AG04449 (cell line): ENCODE measurements at regions of chr2 and their contacts with region 1.

Region 1: DNA sequence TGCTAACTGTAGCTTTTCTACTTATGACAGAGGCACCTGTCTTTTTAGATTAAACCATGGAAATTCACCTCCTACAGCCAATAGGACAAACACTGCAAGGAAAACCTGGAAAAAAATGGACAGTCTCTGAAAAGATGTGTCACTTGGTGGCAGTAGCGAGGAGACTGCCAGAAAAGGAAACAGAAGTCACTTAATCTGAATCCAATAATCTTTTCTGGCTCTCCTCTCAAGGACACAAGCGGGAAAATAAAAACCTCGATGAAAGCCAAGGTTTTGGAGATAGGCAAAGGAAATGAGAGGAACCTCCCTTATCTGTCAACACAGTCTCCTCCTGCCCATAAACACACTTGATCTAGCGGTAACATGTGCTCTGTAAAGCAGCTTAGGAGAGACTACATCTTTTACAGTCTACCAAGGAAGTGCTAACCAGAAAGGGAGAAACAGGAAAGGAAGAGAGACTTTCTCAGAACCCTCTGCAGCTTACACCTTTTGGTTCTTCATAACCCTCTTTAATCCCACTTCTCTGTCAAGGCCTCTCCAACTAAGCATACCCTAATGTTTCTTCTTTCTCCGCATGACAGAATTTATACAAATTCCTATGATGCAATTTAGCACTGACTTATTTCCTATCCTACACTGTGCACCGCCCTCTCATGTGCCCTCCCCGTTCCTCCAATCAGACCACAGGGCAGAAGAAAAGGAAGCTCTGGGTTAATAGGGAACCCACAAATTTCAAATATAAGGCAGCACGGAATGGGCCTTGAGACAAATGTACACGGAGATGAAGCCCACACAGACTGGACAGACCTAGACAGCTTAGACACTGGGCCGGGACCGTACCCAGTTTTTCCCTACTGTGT is 52.8 kb downstream of the CLASP1 start:
- DNase-seq: no peak
- H3K4me3 ChIP-seq: peak overlapping the region; percentile 16; the same call in 1 of the 2 replicates
- CTCF ChIP-seq: peak; percentile 35

Region 2: GRCh38 chr2:121451398-121451797 is 145.1 kb before region 1 on chr2:
- CTCF ChIA-PET with region 1: no interaction called
- POLR2A ChIA-PET with region 1: no interaction called
- DNase-seq: no peak
- H3K4me3 ChIP-seq: no peak overlapping the region
- CTCF ChIP-seq: no peak

Region 3: DNA sequence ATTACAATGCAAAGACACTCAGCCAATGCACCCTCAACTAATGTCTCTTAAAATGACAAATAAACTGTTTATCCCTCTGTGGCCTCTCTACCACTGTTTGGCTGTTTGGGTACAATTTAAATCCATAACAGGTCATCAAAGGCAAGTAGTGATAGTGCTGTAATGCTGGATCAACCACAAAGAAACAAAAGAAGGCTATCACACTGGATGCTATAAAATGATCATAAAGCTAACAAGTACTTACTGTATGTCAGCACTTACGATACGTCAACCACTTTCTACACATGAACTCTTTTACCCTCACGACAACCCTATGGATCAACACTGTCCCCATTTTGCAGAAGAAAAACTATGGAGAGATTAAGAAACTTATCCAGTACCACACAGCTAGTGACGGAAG is 11.7 kb before region 1 on chr2:
- CTCF ChIA-PET with region 1: interaction called, 17 read pairs
- POLR2A ChIA-PET with region 1: no interaction called
- DNase-seq: no peak
- H3K4me3 ChIP-seq: no peak overlapping the region
- CTCF ChIP-seq: no peak

Region 4: DNA sequence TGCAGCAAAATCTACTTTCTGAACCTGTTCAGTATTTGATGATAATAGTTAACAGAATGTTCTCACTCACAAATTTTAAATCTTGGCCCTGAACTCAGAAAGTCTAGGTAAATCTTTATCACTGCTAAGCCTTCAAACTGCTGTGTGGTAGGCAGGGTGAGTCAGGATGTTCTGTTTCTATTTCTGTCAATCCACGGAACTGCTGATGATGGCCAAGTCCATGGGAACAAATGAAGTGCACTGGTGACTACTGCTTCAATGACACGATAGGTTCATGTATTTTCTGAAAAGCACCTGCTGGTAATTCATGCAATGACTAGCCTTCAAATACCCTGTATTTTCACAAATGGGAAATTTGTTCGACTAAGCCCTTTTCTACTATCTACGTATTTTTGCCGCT is 126.0 kb after region 1 on chr2:
- CTCF ChIA-PET with region 1: interaction called, 16 read pairs
- POLR2A ChIA-PET with region 1: no interaction called
- DNase-seq: peak; percentile 40
- H3K4me3 ChIP-seq: no peak overlapping the region; the same call in 1 of the 2 replicates
- CTCF ChIP-seq: no peak

Region 5: GRCh38 chr2:121741450-121741849 is 145.0 kb after region 1 on chr2:
- CTCF ChIA-PET with region 1: no interaction called
- POLR2A ChIA-PET with region 1: no interaction called
- DNase-seq: no peak
- H3K4me3 ChIP-seq: no peak overlapping the region
- CTCF ChIP-seq: no peak

Region 6: DNA sequence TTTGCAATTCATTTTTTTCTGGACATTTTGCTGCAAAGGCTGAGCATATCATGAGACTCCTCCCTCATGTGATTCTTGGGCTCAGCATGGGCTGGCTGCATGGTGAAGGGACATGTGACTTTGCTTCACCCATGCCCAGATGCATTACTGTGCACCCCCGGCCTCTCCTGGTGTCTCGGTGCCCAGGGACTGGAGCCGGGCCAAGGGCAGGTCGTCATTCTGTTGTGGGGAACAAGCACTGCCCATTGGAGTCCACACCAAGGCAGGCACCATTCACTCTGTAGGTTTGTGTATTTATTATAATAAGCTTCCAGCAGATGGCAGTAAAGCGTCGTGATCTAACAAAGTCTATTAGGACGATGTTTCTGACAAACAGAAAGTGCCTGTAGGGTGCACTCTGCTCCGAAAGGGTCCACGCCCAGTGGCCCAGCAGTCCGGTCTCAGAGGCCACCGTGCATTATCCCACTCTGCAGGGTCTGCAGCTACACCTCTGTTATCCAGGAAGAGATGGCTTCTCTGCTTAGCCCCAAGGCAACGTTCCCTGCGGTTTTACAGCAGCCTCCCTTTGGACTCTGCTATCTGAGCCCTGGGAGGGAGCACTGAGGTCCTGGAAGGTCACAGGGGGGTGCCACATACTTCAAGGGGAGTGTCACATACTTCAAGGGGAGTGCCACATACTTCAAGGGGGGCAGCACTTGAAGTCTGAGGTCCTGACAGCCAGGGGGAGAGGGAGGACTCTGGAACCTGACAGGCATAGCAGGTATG is 378.6 kb after region 1 on chr2:
- CTCF ChIA-PET with region 1: no interaction called
- POLR2A ChIA-PET with region 1: no interaction called
- DNase-seq: peak; percentile 17
- H3K4me3 ChIP-seq: peak overlapping the region; percentile 50
- CTCF ChIP-seq: peak; percentile 31